K562 (cell line): ENCODE measurements at regions of chrX and their contacts with region 1.

Region 1: DNA sequence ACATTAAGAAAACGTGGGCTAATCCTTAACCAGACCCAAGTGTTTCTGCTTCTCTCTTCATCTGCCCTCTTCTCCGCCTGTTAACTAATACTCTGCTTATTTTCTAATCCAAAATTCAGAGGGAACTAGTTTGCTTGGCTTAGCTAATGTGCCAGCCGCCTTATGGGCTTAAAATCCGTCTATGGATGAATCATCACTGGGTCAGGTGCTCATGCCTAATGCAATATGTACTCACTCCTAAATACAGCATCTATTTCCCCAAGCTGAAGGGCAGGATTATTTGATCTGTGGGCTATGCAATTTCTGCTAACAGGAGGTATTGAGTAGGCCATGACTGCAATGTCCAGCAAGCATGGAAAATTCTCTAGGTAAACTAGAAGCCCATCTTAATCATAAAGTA is 12.4 kb downstream of the DYNLT3 start:
- DNase-seq: no peak
- ATAC-seq: no peak
- H3K4me3 ChIP-seq: no peak overlapping the region
- H3K27ac ChIP-seq: no peak overlapping the region
- H3K4me1 ChIP-seq: no peaks in the 10 kb centered on the region
- H3K27me3 ChIP-seq: no peaks in the 10 kb centered on the region
- CTCF ChIP-seq: no peak
- EP300 ChIP-seq: no peak
- POLR2A ChIP-seq: no peak
- RAD21 ChIP-seq: no peak

Region 2: DNA sequence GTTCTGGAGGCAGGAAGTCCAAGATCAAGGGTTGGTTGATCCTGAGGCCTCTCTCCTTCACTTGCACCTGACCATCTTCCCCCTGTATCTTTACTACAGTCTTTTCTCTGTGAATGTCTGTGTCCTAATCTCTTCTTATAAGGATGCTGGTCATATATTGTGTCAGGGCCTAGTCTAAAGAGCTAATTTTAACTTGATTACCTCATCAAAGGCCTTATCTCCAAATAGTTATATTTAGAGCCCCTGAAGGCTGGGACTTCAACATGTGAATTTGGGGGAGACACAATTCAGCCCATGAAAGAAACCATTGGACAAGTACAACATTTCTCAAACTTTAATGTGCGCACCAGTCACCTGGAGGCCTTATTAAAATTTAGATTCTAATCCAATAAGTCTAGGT is 75.2 kb after region 1 on chrX:
- CTCF ChIA-PET with region 1: no interaction called
- POLR2A ChIA-PET with region 1: no interaction called
- in situ Hi-C with region 1: no loop called
- intact Hi-C with region 1: loop called (anchors 2 kb)
- DNase-seq: no peak
- ATAC-seq: no peak
- H3K4me3 ChIP-seq: no peak overlapping the region
- H3K27ac ChIP-seq: no peak overlapping the region
- H3K4me1 ChIP-seq: peaks cover 0 to 7% of the 10 kb centered on the region in 2 experiments; a peak in 2 of 5 replicates
- H3K27me3 ChIP-seq: peaks cover 2 to 4% of the 10 kb centered on the region in 2 experiments; a peak in 3 of 5 replicates
- CTCF ChIP-seq: no peak
- EP300 ChIP-seq: no peak
- POLR2A ChIP-seq: no peak
- RAD21 ChIP-seq: no peak